Panc1 (cell line): ENCODE measurements at regions of chr6 and their contacts with region 1.

Region 1: GRCh38 chr6:39202166-39202565 is 27.1 kb downstream of the KCNK5 start:
- DNase-seq: no peak
- ATAC-seq: no peak
- H3K4me3 ChIP-seq: no peak overlapping the region
- H3K27ac ChIP-seq: no peak overlapping the region
- H3K4me1 ChIP-seq: no peaks in the 10 kb centered on the region
- H3K27me3 ChIP-seq: no peaks in the 10 kb centered on the region; the same call in 1 of the 2 replicates
- CTCF ChIP-seq: no peak

Region 2: GRCh38 chr6:38671885-38672467 is 530.2 kb before region 1 on chr6:
- CTCF ChIA-PET with region 1: interaction called, 10 read pairs
- POLR2A ChIA-PET with region 1: no interaction called
- in situ Hi-C with region 1: no loop called
- intact Hi-C with region 1: no loop called
- DNase-seq: peak; percentile 43
- ATAC-seq: peak; percentile 91
- H3K4me3 ChIP-seq: no peak overlapping the region
- H3K27ac ChIP-seq: no peak overlapping the region
- H3K4me1 ChIP-seq: no peaks in the 10 kb centered on the region
- H3K27me3 ChIP-seq: no peaks in the 10 kb centered on the region
- CTCF ChIP-seq: peak; percentile 80